SK-N-SH (cell line): ENCODE measurements at regions of chr2 and their contacts with region 1.

Region 1: GRCh38 chr2:96174251-96175144 is 29.3 kb upstream of the DUSP2 start:
- DNase-seq: peak; percentile 85
- H3K4me3 ChIP-seq: no peak overlapping the region; a peak in 1 of 4 replicates
- H3K27ac ChIP-seq: no peak overlapping the region
- H3K4me1 ChIP-seq: peaks cover 2 to 4% of the 10 kb centered on the region in 2 experiments; a peak in 3 of 4 replicates
- H3K27me3 ChIP-seq: no peaks in the 10 kb centered on the region
- CTCF ChIP-seq: peak; percentile 91
- EP300 ChIP-seq: no peak
- RAD21 ChIP-seq: peak; percentile 98

Region 2: GRCh38 chr2:96091533-96092334 is 82.8 kb before region 1 on chr2:
- CTCF ChIA-PET with region 1: interaction called, 13 read pairs
- POLR2A ChIA-PET with region 1: no interaction called
- DNase-seq: no peak
- H3K4me3 ChIP-seq: no peak overlapping the region
- H3K27ac ChIP-seq: no peak overlapping the region; a peak in 1 of 4 replicates
- H3K4me1 ChIP-seq: peaks cover 0 to 34% of the 10 kb centered on the region in 2 experiments; a peak in 1 of 4 replicates
- H3K27me3 ChIP-seq: no peaks in the 10 kb centered on the region
- CTCF ChIP-seq: no peak
- EP300 ChIP-seq: no peak
- RAD21 ChIP-seq: no peak

Region 3: DNA sequence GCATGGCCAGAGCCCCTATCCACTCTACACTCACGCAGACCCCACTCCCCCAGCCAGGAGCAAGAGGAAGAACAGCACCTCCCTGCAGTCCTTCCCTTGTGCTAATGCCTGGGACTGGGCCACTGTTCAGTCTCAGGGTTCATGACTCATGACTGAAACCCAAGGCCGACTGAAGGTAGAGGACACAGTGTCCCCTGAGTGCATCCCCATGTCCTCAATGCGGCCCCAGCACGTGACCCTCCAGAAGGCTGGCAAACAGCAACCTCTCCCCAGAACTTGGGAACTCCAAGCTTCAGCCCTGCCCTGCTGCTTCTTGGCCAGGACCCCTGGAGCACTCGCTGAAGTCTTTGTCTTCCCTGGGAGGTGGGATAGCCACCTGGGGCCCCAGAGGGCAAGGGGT is 52.1 kb before region 1 on chr2:
- CTCF ChIA-PET with region 1: interaction called, 101 read pairs
- POLR2A ChIA-PET with region 1: interaction called, 3 read pairs
- DNase-seq: no peak
- H3K4me3 ChIP-seq: no peak overlapping the region
- H3K27ac ChIP-seq: no peak overlapping the region
- H3K4me1 ChIP-seq: peaks cover 0 to 8% of the 10 kb centered on the region in 2 experiments; a peak in 1 of 4 replicates
- H3K27me3 ChIP-seq: no peaks in the 10 kb centered on the region; the same call in 1 of the 2 replicates
- CTCF ChIP-seq: no peak
- EP300 ChIP-seq: no peak
- RAD21 ChIP-seq: no peak

Region 4: GRCh38 chr2:96138179-96139145 is 36.0 kb before region 1 on chr2 and contains the start of gene ASTL:
- CTCF ChIA-PET with region 1: interaction called, 102 read pairs
- POLR2A ChIA-PET with region 1: interaction called, 6 read pairs
- DNase-seq: peak; percentile 73
- H3K4me3 ChIP-seq: no peak within 1 kb of the TSS; a peak in 1 of 4 replicates
- H3K27ac ChIP-seq: no peak within 1 kb of the TSS
- H3K4me1 ChIP-seq: peaks cover 0 to 22% of the 10 kb centered on the region in 2 experiments; a peak in 1 of 4 replicates
- H3K27me3 ChIP-seq: peaks cover 7% of the 10 kb centered on the region; the same call in 1 of the 2 replicates
- CTCF ChIP-seq: peak; percentile 53
- EP300 ChIP-seq: no peak
- RAD21 ChIP-seq: peak; percentile 71
- polyA plus RNA-seq, gene ASTL: not detected in 2 replicates

Region 5: DNA sequence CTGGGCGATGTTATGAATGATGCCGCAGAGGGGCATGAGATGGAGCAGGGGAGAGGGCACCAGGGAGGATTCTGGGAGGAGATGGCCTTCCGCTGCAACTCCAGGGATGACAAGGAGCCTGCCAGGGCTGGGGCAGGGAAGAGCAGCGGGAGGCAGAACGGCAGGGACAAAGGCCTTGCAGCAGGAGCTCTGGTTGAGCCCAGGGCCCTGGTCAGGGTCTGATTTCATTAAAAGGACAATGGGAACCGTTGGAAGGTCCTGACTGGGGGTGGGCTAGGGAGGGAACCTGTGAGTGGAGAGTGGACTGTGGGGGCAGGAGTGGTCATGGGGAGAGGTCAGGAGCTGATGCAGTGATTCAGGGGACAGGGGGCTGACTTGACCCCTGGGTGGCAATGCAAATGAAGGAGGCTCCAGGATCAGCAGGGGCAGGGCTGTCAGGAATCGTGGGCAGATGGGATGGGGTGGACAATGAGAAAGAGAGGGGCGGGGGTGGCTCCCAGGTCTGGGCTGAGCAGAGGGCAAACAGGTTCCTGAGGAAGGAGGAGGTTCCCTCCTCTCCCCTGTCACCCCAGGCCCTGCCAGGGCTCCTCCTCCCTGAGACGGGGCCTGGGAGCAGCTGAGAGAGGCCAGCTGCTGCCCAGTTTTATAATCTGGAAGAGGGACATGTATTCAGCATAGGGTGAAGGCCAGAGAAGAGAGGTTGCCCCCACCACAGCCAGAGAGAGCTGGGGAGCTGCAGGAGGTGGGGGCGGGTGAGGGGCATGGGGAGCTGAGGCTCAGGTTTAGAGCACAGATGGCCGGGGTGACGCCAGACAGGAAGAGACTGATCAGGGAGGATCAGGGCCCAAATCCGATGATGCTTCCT is 22.0 kb before region 1 on chr2:
- CTCF ChIA-PET with region 1: interaction called, 29 read pairs
- POLR2A ChIA-PET with region 1: no interaction called
- DNase-seq: peak; percentile 45
- H3K4me3 ChIP-seq: no peak overlapping the region
- H3K27ac ChIP-seq: 0 out of 4 replicates have a peak overlapping the region, but pooled peaks of 1 of the 2 experiments have one; percentile 24
- H3K4me1 ChIP-seq: peaks cover 15 to 27% of the 10 kb centered on the region in 2 experiments
- H3K27me3 ChIP-seq: no peaks in the 10 kb centered on the region
- CTCF ChIP-seq: no peak
- EP300 ChIP-seq: no peak
- RAD21 ChIP-seq: no peak

Region 6: GRCh38 chr2:96186562-96186961 is 12.1 kb after region 1 on chr2:
- CTCF ChIA-PET with region 1: interaction called, 37 read pairs
- POLR2A ChIA-PET with region 1: no interaction called
- DNase-seq: no peak
- H3K4me3 ChIP-seq: no peak overlapping the region
- H3K27ac ChIP-seq: no peak overlapping the region
- H3K4me1 ChIP-seq: no peaks in the 10 kb centered on the region
- H3K27me3 ChIP-seq: no peaks in the 10 kb centered on the region
- CTCF ChIP-seq: no peak
- EP300 ChIP-seq: no peak
- RAD21 ChIP-seq: no peak

Region 7: DNA sequence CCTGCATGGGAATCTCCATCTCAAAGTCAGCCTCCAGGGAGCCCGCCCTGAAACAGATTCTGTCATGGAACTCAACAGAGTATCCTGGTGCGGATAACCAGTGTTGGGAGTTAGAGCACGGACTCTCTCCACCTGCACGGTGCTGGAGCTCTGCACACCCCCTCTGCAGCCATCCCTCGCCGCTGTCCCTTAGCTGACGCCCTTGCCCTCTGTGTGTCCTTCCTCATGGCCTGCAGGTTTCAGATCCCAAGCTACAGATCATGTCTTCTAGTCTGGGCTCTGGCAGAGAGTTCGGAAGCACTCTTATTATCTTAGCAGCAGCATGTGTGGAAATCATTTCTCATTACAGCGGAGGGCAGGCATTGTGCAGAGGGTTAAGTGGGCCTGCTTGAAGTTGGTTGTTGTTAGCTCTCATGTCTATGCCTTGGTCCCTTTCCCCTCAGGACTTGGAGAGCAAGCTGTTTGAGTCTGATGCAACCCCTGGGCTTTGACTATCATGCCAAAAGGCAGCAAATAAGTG is 65.3 kb after region 1 on chr2:
- CTCF ChIA-PET with region 1: no interaction called
- POLR2A ChIA-PET with region 1: no interaction called
- DNase-seq: no peak
- H3K4me3 ChIP-seq: no peak overlapping the region
- H3K27ac ChIP-seq: no peak overlapping the region
- H3K4me1 ChIP-seq: no peaks in the 10 kb centered on the region; a peak in 1 of 4 replicates
- H3K27me3 ChIP-seq: no peaks in the 10 kb centered on the region
- CTCF ChIP-seq: no peak
- EP300 ChIP-seq: no peak
- RAD21 ChIP-seq: no peak

Region 8: GRCh38 chr2:96260404-96261260 is 86.1 kb after region 1 on chr2:
- CTCF ChIA-PET with region 1: interaction called, 24 read pairs
- POLR2A ChIA-PET with region 1: no interaction called
- DNase-seq: peak; percentile 81
- H3K4me3 ChIP-seq: peak overlapping the region in 1 of 2 experiments; percentile 21; a peak in 3 of 4 replicates
- H3K27ac ChIP-seq: peak overlapping the region; percentile 70
- H3K4me1 ChIP-seq: peaks cover 34 to 50% of the 10 kb centered on the region in 2 experiments
- H3K27me3 ChIP-seq: no peaks in the 10 kb centered on the region
- CTCF ChIP-seq: peak; percentile 70
- EP300 ChIP-seq: 0 out of 4 replicates have a peak, but pooled peaks of 1 of the 2 experiments have one; percentile 6
- RAD21 ChIP-seq: peak; percentile 61